ENCODE measurements at regions of chr6 and their contacts with region 1.

Region 1: GRCh38 chr6:30326526-30327260 is at the start of gene TRIM39:
- DNase-seq: peak; percentile 62 to 86
- H3K4me3 ChIP-seq: peak within 1 kb of the TSS; percentile 91
- H3K27ac ChIP-seq: peak within 1 kb of the TSS; percentile 82
- H3K4me1 ChIP-seq: peaks cover 20% of the 10 kb centered on the region
- H3K27me3 ChIP-seq: no peaks in the 10 kb centered on the region
- CTCF ChIP-seq: no peak
- total RNA-seq, gene TRIM39: 12.5 and 14.4 TPM in 2 replicates

Region 2: DNA sequence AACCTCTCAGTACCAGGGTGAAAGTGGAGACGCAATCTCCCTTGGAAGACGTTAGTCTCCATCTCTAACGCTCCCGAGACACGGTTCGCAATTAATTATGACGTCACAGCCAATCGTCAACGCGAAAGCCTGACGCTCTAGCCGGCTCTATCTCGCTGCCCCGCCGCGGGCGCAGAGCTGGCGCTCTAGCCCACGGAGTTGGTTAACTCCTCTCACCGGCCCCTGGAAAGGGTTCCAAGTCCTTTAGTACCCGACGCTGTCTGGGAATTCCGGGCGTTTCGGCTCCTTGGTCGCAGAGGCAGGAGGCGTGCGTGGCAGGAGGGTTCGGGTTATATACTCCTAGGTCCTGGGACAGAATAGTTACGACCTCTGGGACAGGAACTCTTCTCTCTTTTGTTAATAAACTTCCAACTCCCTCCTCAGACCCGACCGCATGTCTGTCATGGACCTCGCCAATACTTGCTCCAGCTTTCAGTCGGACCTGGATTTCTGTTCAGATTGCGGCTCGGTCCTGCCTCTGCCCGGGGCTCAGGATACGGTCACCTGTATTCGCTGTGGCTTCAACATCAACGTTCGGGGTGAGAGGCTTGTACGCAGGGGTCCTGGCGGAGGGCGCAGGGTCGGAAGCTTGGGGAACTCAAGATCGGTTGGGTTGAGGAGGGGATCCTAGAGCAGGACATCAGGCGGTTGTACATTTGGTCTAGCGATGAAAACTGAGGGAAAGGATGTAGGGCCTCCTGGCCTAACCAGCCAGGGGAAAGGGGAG is 265.4 kb before region 1 on chr6 and contains the start of gene POLR1H:
- CTCF ChIA-PET with region 1: no interaction called
- POLR2A ChIA-PET with region 1: no interaction called
- intact Hi-C with region 1: loop called (anchors 5 kb)
- DNase-seq: peak; percentile 88 to 90
- H3K4me3 ChIP-seq: peak within 1 kb of the TSS; percentile 95
- H3K27ac ChIP-seq: peak within 1 kb of the TSS; percentile 35; the same call in 1 of the 2 replicates
- H3K4me1 ChIP-seq: peaks cover 24% of the 10 kb centered on the region
- H3K27me3 ChIP-seq: no peaks in the 10 kb centered on the region
- CTCF ChIP-seq: no peak
- total RNA-seq, gene POLR1H: 33.3 and 37.6 TPM in 2 replicates

Region 3: DNA sequence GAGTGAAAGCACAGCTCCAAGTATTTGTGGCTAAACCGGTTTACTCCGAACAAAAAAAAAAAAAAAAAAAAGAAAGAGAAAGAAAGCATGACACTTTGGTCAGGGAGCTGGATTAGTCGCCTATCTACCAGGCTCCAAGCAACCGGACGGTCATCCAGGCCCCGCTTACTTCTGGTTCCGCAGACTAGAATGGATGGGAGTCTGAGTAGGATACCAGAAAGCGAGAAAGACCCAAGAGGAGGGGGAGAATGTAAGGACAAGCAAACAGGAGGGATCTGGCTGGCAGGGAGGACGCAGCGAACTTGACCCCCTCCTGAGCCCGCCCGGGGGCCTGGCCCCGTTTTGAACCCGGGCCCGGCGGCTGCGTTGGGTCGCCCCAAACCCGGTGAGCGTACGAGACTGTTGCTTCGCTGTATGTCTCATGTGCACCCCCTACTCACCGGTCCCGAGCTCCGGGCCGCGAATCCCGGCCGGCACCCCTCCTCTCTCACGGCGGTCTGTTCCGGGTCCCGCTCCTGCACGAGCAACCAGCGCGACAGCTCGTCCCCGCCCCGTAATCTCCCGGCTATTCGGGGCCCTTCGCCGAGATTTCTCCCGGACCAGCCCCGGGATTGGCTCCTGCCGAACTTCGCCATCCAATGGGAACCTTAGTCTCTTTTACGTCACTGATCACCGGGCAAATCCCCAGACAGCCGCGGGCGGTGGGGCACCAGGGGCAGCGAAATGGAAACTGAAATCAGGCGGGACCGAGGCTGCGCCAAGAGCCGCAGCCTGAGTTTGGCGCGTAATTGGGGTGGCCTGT is 113.6 kb before region 1 on chr6 and contains the start of gene TRIM26:
- CTCF ChIA-PET with region 1: no interaction called
- POLR2A ChIA-PET with region 1: no interaction called
- intact Hi-C with region 1: loop called (anchors 5 kb)
- DNase-seq: peak; percentile 94 to 99
- H3K4me3 ChIP-seq: peak within 1 kb of the TSS; percentile 95
- H3K27ac ChIP-seq: peak within 1 kb of the TSS; percentile 83
- H3K4me1 ChIP-seq: peaks cover 27% of the 10 kb centered on the region
- H3K27me3 ChIP-seq: no peaks in the 10 kb centered on the region
- CTCF ChIP-seq: no peak
- total RNA-seq, gene TRIM26: 45.3 and 53.9 TPM in 2 replicates

Region 4: GRCh38 chr6:30441171-30441570 is 114.5 kb after region 1 on chr6:
- CTCF ChIA-PET with region 1: no interaction called
- POLR2A ChIA-PET with region 1: interaction called, 10 read pairs
- intact Hi-C with region 1: no loop called
- DNase-seq: peak in 1 of 2 experiments; percentile 38
- H3K4me3 ChIP-seq: no peak overlapping the region
- H3K27ac ChIP-seq: no peak overlapping the region
- H3K4me1 ChIP-seq: no peaks in the 10 kb centered on the region
- H3K27me3 ChIP-seq: peaks cover 93% of the 10 kb centered on the region
- CTCF ChIP-seq: no peak

Region 5: GRCh38 chr6:31037682-31038081 is 711.0 kb after region 1 on chr6:
- CTCF ChIA-PET with region 1: interaction called, 14 read pairs
- POLR2A ChIA-PET with region 1: no interaction called
- intact Hi-C with region 1: no loop called
- DNase-seq: peak in 1 of 2 experiments; percentile 47
- H3K4me3 ChIP-seq: no peak overlapping the region
- H3K27ac ChIP-seq: no peak overlapping the region
- H3K4me1 ChIP-seq: peaks cover 20% of the 10 kb centered on the region
- H3K27me3 ChIP-seq: no peaks in the 10 kb centered on the region
- CTCF ChIP-seq: no peak

Measured in PC-9 (cell line).